H1 (cell line): ENCODE measurements at regions of chr7 and their contacts with region 1.

Region 1: DNA sequence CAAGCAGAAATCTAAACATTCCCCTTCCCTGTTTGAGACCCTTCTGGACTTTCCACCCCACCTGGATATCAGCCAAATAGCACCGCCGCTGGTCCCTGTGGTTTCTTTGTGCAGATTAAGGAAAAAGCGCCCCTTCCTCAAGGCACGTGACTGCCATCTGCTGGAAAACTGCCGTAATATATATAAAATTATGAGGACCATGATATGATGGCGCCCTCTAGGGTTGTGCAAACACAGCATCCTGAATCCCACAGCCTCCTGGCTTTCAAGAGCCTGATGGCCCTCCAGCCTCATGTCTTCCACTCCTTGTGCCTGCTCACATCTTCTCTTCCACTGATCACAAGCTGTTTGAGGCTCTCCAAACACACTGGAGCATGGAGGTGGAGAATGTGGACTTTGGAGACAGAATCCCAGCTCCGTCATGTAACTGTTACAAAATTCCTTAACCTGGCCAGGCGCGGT is 121.3 kb downstream of the MYL10 start:
- DNase-seq: peak in 1 of 2 experiments; percentile 81
- H3K4me3 ChIP-seq: no peak overlapping the region
- H3K27ac ChIP-seq: no peak overlapping the region
- H3K4me1 ChIP-seq: peaks cover 2 to 15% (median 7%) of the 10 kb centered on the region in 4 experiments
- H3K27me3 ChIP-seq: no peaks in the 10 kb centered on the region
- CTCF ChIP-seq: peak; percentile 72 to 100 (median 93)
- EP300 ChIP-seq: no peak
- POLR2A ChIP-seq: no peak
- RAD21 ChIP-seq: peak; percentile 94 to 96

Region 2: GRCh38 chr7:101258243-101258731 is 249.5 kb before region 1 on chr7:
- CTCF ChIA-PET with region 1: no interaction called
- POLR2A ChIA-PET with region 1: no interaction called
- DNase-seq: no peak
- H3K4me3 ChIP-seq: no peak overlapping the region
- H3K27ac ChIP-seq: no peak overlapping the region
- H3K4me1 ChIP-seq: no peaks in the 10 kb centered on the region
- H3K27me3 ChIP-seq: no peaks in the 10 kb centered on the region; a peak in 1 of 7 replicates
- CTCF ChIP-seq: no peak
- EP300 ChIP-seq: no peak
- POLR2A ChIP-seq: no peak
- RAD21 ChIP-seq: no peak

Region 3: GRCh38 chr7:101321491-101322401 is 186.1 kb before region 1 on chr7 and contains the start of gene IFT22:
- CTCF ChIA-PET with region 1: interaction called, 11 read pairs
- POLR2A ChIA-PET with region 1: no interaction called
- DNase-seq: peak in 1 of 2 experiments; percentile 94
- H3K4me3 ChIP-seq: peak within 1 kb of the TSS; percentile 74 to 89 (median 80)
- H3K27ac ChIP-seq: peak within 1 kb of the TSS; percentile 71
- H3K4me1 ChIP-seq: peaks cover 0 to 5% (median 1%) of the 10 kb centered on the region in 4 experiments; a peak in 1 of 7 replicates
- H3K27me3 ChIP-seq: no peaks in the 10 kb centered on the region
- CTCF ChIP-seq: peak; percentile 31 to 50 (median 50)
- EP300 ChIP-seq: no peak
- POLR2A ChIP-seq: peak in 1 of 2 experiments; percentile 91; a peak in 2 of 3 replicates
- RAD21 ChIP-seq: peak; percentile 48 to 69
- total RNA-seq, gene IFT22: 17.7 and 17.8 TPM in 2 replicates

Region 4: GRCh38 chr7:101442521-101442981 is 65.3 kb before region 1 on chr7:
- CTCF ChIA-PET with region 1: interaction called, 20 read pairs
- POLR2A ChIA-PET with region 1: no interaction called
- DNase-seq: no peak
- H3K4me3 ChIP-seq: no peak overlapping the region
- H3K27ac ChIP-seq: peak overlapping the region; percentile 30; the same call in 1 of the 2 replicates
- H3K4me1 ChIP-seq: no peaks in the 10 kb centered on the region; a peak in 1 of 7 replicates
- H3K27me3 ChIP-seq: no peaks in the 10 kb centered on the region
- CTCF ChIP-seq: no peak
- EP300 ChIP-seq: no peak
- POLR2A ChIP-seq: no peak
- RAD21 ChIP-seq: no peak

Region 5: GRCh38 chr7:101486433-101487104 is 21.3 kb before region 1 on chr7:
- CTCF ChIA-PET with region 1: interaction called, 16 read pairs
- POLR2A ChIA-PET with region 1: interaction called, 3 read pairs
- DNase-seq: peak in 1 of 2 experiments; percentile 68
- H3K4me3 ChIP-seq: peak overlapping the region in 1 of 4 experiments; percentile 0; a peak in 1 of 8 replicates
- H3K27ac ChIP-seq: peak overlapping the region; percentile 5; the same call in 1 of the 2 replicates
- H3K4me1 ChIP-seq: peaks cover 9 to 21% (median 14%) of the 10 kb centered on the region in 4 experiments
- H3K27me3 ChIP-seq: 0 out of 7 replicates have a peak, but pooled peaks cover 0 to 2% (median 0%) of the 10 kb centered on the region in 4 experiments
- CTCF ChIP-seq: no peak
- EP300 ChIP-seq: no peak
- POLR2A ChIP-seq: no peak
- RAD21 ChIP-seq: no peak

Region 6: DNA sequence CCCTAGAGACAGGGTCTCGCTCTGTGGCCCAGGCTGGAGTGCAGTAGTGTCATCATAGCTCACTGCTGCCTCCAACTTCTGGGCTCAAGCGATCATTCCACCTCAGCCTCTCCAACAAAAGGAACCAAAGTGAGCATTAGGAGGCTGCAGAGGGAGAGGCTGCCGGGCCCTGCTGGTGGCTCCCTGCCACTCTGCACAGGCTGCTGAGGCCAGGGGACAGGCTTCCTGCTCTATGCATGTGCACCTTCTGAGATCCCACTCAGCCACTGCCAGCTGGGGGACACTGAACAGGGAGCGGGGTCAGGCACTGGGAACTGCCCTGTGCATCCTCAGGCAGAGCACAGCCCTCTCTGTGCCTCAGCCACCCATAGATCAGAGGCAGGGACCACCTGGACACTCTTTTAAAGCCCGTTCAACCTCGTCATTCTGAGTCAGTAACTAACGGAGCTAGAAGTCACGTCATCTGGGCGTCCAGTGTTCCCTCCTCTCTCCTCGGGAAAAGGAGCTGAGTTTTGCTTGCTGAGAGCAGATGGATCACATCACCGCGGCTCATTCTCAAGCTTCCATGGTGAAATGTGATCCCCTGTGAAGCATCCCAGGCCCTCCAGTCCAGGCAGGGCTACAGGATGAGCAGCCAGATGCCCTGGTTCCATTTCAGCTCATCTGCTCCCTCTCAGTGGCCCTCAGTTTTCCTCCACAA is 11.7 kb after region 1 on chr7:
- CTCF ChIA-PET with region 1: interaction called, 70 read pairs
- POLR2A ChIA-PET with region 1: interaction called, 3 read pairs
- DNase-seq: no peak
- H3K4me3 ChIP-seq: no peak overlapping the region
- H3K27ac ChIP-seq: no peak overlapping the region
- H3K4me1 ChIP-seq: peaks cover 0 to 6% (median 2%) of the 10 kb centered on the region in 4 experiments; a peak in 3 of 7 replicates
- H3K27me3 ChIP-seq: no peaks in the 10 kb centered on the region
- CTCF ChIP-seq: no peak
- EP300 ChIP-seq: no peak
- POLR2A ChIP-seq: no peak
- RAD21 ChIP-seq: no peak

Region 7: DNA sequence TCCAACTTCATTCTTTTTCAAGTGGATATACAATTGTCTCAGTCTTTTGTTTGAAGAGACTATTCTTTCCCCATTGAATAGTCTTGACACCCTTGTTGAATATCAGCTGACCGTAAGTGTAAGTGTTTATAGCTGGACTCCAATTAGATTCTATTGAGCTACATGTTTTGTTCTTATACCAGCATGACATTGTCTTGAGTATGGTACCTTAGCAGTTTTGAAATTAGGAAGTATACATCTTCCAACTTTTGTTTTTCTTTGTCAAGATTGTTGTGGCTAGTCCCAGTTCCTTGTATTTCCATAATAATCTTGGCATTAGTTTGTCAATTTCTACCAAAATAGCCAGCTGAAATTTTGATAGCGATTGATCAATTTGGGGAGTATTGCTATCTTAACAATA is 64.3 kb after region 1 on chr7:
- CTCF ChIA-PET with region 1: no interaction called
- POLR2A ChIA-PET with region 1: no interaction called
- DNase-seq: no peak
- H3K4me3 ChIP-seq: no peak overlapping the region
- H3K27ac ChIP-seq: no peak overlapping the region
- H3K4me1 ChIP-seq: peaks cover 0 to 4% (median 1%) of the 10 kb centered on the region in 4 experiments; a peak in 3 of 7 replicates
- H3K27me3 ChIP-seq: no peaks in the 10 kb centered on the region
- CTCF ChIP-seq: no peak
- EP300 ChIP-seq: no peak
- POLR2A ChIP-seq: no peak
- RAD21 ChIP-seq: no peak

Region 8: DNA sequence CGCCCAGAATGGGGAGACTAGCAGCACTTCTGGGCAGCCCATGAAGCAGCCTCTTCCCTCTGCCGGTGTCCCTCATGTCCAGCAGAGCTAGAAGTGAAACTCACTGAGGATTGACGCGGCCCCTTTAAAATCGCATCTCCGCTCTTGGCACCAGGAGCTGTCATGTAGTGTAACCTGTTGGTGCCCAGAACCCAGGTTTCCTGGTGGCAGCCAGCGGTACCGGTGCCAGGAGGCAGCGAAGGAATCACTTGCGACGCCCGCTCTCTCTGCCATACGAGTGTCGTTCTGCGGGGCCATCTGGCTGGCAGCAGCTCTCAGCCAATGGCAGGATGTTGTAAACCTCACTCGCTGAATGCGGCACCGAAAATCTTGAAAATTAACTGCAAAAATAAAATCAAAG is 392.3 kb after region 1 on chr7:
- CTCF ChIA-PET with region 1: no interaction called
- POLR2A ChIA-PET with region 1: no interaction called
- DNase-seq: no peak
- H3K4me3 ChIP-seq: no peak overlapping the region
- H3K27ac ChIP-seq: no peak overlapping the region
- H3K4me1 ChIP-seq: peaks cover 0 to 3% (median 2%) of the 10 kb centered on the region in 4 experiments; a peak in 3 of 7 replicates
- H3K27me3 ChIP-seq: no peaks in the 10 kb centered on the region
- CTCF ChIP-seq: no peak
- EP300 ChIP-seq: no peak
- POLR2A ChIP-seq: no peak
- RAD21 ChIP-seq: no peak